Naive thymus-derived CD4-positive, alpha-beta T cell (primary cell): ENCODE measurements at regions of chr1 and their contacts with region 1.

Region 1: GRCh38 chr1:109773146-109773899 is 9.6 kb upstream of the EPS8L3 start:
- DNase-seq: peak; percentile 34 to 79 (median 69)
- ATAC-seq: peak; percentile 87
- H3K4me3 ChIP-seq: no peak overlapping the region
- H3K4me3 Mint-ChIP-seq: no peak overlapping the region
- H3K27ac ChIP-seq: no peak overlapping the region
- H3K27ac Mint-ChIP-seq: peak overlapping the region in 1 of 9 donors; percentile 73
- H3K4me1 ChIP-seq: peaks cover 0 to 4% of the 10 kb centered on the region in 2 donors
- H3K4me1 Mint-ChIP-seq: peaks cover 0 to 21% (median 6%) of the 10 kb centered on the region in 7 donors
- H3K27me3 ChIP-seq: no peaks in the 10 kb centered on the region
- H3K27me3 Mint-ChIP-seq: peaks cover 0 to 12% (median 5%) of the 10 kb centered on the region in 5 donors

Region 2: DNA sequence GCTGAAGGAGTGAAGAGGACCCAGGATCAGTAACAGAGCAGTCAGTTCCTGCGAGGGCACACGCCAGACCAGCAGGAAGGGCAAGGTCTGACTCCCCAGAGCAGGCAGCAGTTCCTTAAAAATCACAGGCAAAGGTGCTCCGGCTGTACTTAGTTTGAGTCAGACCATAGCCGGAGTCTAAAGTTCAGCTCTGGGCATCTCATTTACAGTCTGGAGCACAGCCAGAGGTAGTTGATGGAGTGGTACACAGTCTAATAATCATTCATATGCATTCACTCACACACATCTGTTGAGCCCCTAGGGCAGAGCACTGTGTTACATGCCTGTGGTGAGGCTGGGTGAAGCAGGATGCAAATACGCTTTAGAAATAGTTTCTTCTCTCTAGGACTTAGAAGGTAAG is 256.5 kb before region 1 on chr1:
- CTCF ChIA-PET with region 1: no interaction called
- POLR2A ChIA-PET with region 1: no interaction called
- intact Hi-C with region 1: no loop called
- DNase-seq: no peak
- ATAC-seq: no peak
- H3K4me3 ChIP-seq: no peak overlapping the region
- H3K4me3 Mint-ChIP-seq: no peak overlapping the region
- H3K27ac ChIP-seq: no peak overlapping the region
- H3K27ac Mint-ChIP-seq: no peak overlapping the region
- H3K4me1 ChIP-seq: peaks cover 0 to under 1% of the 10 kb centered on the region in 2 donors
- H3K4me1 Mint-ChIP-seq: peaks cover 0 to 13% (median 6%) of the 10 kb centered on the region in 7 donors
- H3K27me3 ChIP-seq: no peaks in the 10 kb centered on the region
- H3K27me3 Mint-ChIP-seq: peaks cover 0 to 30% (median 0%) of the 10 kb centered on the region in 5 donors

Region 3: DNA sequence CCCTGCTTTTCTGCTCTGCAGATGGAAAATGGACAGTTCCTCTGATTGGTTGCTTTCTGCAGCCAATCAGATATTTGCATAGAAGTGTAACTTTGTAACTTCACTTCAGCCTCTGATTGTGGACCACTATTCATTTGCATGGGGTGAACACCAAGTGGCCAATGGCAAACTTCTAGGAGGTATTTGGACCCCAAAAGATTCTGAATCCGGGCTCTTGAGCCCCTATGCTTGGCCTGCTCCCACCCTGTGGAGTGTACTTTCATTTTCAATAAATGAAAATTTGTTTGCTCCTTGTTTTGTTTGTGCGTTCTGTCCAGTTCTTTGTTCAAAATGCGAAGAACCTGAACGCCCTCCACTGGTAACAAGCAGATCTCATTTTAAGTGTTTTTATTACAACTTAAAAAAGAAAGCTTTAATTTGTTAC is 123.8 kb before region 1 on chr1:
- CTCF ChIA-PET with region 1: interaction called, 21 read pairs
- POLR2A ChIA-PET with region 1: no interaction called
- intact Hi-C with region 1: no loop called
- DNase-seq: peak in 1 of 9 donors; percentile 6
- ATAC-seq: no peak
- H3K4me3 ChIP-seq: no peak overlapping the region
- H3K4me3 Mint-ChIP-seq: no peak overlapping the region
- H3K27ac ChIP-seq: no peak overlapping the region
- H3K27ac Mint-ChIP-seq: no peak overlapping the region
- H3K4me1 ChIP-seq: no peaks in the 10 kb centered on the region
- H3K4me1 Mint-ChIP-seq: peaks cover 0 to 7% (median 2%) of the 10 kb centered on the region in 7 donors
- H3K27me3 ChIP-seq: no peaks in the 10 kb centered on the region
- H3K27me3 Mint-ChIP-seq: peaks cover 0 to 39% (median 5%) of the 10 kb centered on the region in 5 donors

Region 4: GRCh38 chr1:109783429-109783831 is 10.1 kb after region 1 on chr1:
- CTCF ChIA-PET with region 1: interaction called, 23 read pairs
- POLR2A ChIA-PET with region 1: interaction called, 3 read pairs
- intact Hi-C with region 1: no loop called
- DNase-seq: no peak
- ATAC-seq: no peak
- H3K4me3 ChIP-seq: no peak overlapping the region
- H3K4me3 Mint-ChIP-seq: no peak overlapping the region
- H3K27ac ChIP-seq: no peak overlapping the region
- H3K27ac Mint-ChIP-seq: no peak overlapping the region
- H3K4me1 ChIP-seq: peaks cover 0 to 2% of the 10 kb centered on the region in 2 donors
- H3K4me1 Mint-ChIP-seq: peaks cover 3 to 25% (median 16%) of the 10 kb centered on the region in 7 donors
- H3K27me3 ChIP-seq: no peaks in the 10 kb centered on the region
- H3K27me3 Mint-ChIP-seq: no peaks in the 10 kb centered on the region

Region 5: DNA sequence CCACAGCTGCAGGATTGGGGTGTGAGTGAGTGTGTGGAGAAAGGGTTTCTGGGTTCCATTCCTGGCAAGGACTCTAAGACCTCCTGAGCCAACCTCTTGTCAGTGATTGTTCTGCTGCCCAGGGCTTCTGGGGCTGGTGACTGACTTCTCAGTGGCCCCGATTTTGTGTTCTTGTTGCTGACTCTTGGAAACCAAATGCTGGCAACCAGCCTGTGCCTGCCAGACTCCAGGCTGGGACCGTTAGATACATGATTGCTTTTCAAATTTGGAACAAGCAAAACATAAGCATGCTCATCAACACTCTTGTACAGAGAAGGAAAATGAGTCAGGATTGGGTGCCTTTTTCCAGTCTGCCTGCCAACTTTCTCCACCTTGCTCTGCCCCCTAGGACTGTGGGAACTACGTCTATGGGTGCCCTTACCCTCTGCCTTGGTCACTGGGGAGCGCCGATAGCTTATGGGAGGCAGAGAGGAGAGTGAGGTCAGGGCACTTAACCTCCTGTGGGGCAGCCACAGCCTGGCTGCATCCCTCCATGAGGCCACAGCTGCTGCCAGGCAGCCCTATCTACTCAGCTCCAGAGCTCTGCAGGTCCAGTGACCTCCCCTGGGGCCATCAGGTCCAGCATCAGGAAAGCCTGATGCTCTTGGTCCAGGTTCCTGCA is 29.7 kb after region 1 on chr1:
- CTCF ChIA-PET with region 1: interaction called, 17 read pairs
- POLR2A ChIA-PET with region 1: no interaction called
- intact Hi-C with region 1: no loop called
- DNase-seq: no peak
- ATAC-seq: no peak
- H3K4me3 ChIP-seq: peak overlapping the region; percentile 46
- H3K4me3 Mint-ChIP-seq: peak overlapping the region; percentile 44 to 85 (median 80)
- H3K27ac ChIP-seq: peak overlapping the region; percentile 28
- H3K27ac Mint-ChIP-seq: peak overlapping the region; percentile 84 to 98 (median 94)
- H3K4me1 ChIP-seq: peaks cover 42 to 62% of the 10 kb centered on the region in 2 donors
- H3K4me1 Mint-ChIP-seq: peaks cover 51 to 84% (median 79%) of the 10 kb centered on the region in 7 donors
- H3K27me3 ChIP-seq: no peaks in the 10 kb centered on the region
- H3K27me3 Mint-ChIP-seq: no peaks in the 10 kb centered on the region

Region 6: GRCh38 chr1:109984456-109985275 is 211.3 kb after region 1 on chr1 and contains the start of gene AHCYL1:
- CTCF ChIA-PET with region 1: interaction called, 382 read pairs
- POLR2A ChIA-PET with region 1: interaction called, 32 read pairs
- intact Hi-C with region 1: loop called (anchors 1 kb)
- DNase-seq: peak; percentile 97 to 99 (median 99)
- ATAC-seq: peak; percentile 99
- H3K4me3 ChIP-seq: peak within 1 kb of the TSS; percentile 72
- H3K4me3 Mint-ChIP-seq: peak within 1 kb of the TSS; percentile 87 to 100 (median 97)
- H3K27ac ChIP-seq: peak within 1 kb of the TSS; percentile 92
- H3K27ac Mint-ChIP-seq: peak within 1 kb of the TSS; percentile 94 to 99 (median 98)
- H3K4me1 ChIP-seq: peaks cover 22 to 24% of the 10 kb centered on the region in 2 donors
- H3K4me1 Mint-ChIP-seq: peaks cover 22 to 49% (median 42%) of the 10 kb centered on the region in 7 donors
- H3K27me3 ChIP-seq: no peaks in the 10 kb centered on the region
- H3K27me3 Mint-ChIP-seq: peaks cover 0 to 6% (median 0%) of the 10 kb centered on the region in 5 donors
- total RNA-seq, gene AHCYL1: 16.6 to 60.1 (median 37.1) TPM

Region 7: DNA sequence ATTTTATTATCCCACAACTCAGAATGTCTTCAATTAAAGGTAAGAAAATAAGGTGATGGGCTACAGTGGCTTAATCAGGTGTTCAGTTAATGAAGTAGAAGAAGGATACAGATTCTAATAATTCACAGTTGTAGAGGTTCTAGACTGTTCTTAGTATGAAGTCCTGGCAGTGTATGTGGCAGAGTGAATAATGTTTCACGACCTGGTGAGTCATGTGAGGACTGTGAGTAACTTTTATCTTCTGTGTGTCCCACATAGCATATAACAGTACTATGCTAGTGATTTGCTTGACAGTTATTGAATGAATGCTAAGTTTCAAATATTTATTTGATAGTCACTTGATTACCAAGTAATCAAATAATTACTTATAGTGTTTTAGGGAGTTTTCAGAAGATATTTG is 597.5 kb after region 1 on chr1:
- CTCF ChIA-PET with region 1: no interaction called
- POLR2A ChIA-PET with region 1: no interaction called
- intact Hi-C with region 1: no loop called
- DNase-seq: no peak
- ATAC-seq: no peak
- H3K4me3 ChIP-seq: no peak overlapping the region
- H3K4me3 Mint-ChIP-seq: no peak overlapping the region
- H3K27ac ChIP-seq: no peak overlapping the region
- H3K27ac Mint-ChIP-seq: peak overlapping the region in 1 of 9 donors; percentile 12
- H3K4me1 ChIP-seq: no peaks in the 10 kb centered on the region
- H3K4me1 Mint-ChIP-seq: peaks cover 0 to 5% (median 0%) of the 10 kb centered on the region in 7 donors
- H3K27me3 ChIP-seq: no peaks in the 10 kb centered on the region
- H3K27me3 Mint-ChIP-seq: no peaks in the 10 kb centered on the region

Region 8: DNA sequence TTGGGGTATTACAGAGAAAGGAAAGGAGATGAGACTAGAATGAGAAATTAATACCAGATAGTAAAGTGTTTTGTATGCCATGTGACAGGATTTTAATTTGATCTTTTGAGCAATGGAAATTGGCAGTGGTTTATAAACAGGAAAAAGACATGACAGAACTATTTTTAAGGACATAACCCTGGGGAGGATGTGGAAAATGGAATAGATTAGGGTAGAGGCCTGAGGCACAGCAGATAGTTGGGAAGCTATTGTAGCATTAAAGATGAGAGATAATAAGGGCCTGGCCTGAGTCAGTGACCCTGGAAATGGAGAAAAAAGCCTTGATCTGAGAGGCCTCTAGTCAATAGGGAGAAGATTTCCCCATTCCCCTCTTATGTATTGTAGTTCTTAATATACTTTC is 923.5 kb after region 1 on chr1:
- CTCF ChIA-PET with region 1: no interaction called
- POLR2A ChIA-PET with region 1: no interaction called
- intact Hi-C with region 1: no loop called
- DNase-seq: no peak
- ATAC-seq: no peak
- H3K4me3 ChIP-seq: no peak overlapping the region
- H3K4me3 Mint-ChIP-seq: no peak overlapping the region
- H3K27ac ChIP-seq: no peak overlapping the region
- H3K27ac Mint-ChIP-seq: no peak overlapping the region
- H3K4me1 ChIP-seq: no peaks in the 10 kb centered on the region
- H3K4me1 Mint-ChIP-seq: peaks cover 0 to 7% (median 0%) of the 10 kb centered on the region in 7 donors
- H3K27me3 ChIP-seq: no peaks in the 10 kb centered on the region
- H3K27me3 Mint-ChIP-seq: peaks cover 0 to 10% (median 4%) of the 10 kb centered on the region in 5 donors